ENCODE measurements at regions of chr12 and their contacts with region 1.

Region 1: GRCh38 chr12:32755654-32756475 is at the start of gene YARS2:
- DNase-seq: peak; percentile 91
- H3K4me3 ChIP-seq: peak within 1 kb of the TSS; percentile 88
- H3K27me3 ChIP-seq: no peaks in the 10 kb centered on the region
- CTCF ChIP-seq: peak; percentile 71
- polyA plus RNA-seq, gene YARS2: 19.0 TPM in 2 replicates

Region 2: DNA sequence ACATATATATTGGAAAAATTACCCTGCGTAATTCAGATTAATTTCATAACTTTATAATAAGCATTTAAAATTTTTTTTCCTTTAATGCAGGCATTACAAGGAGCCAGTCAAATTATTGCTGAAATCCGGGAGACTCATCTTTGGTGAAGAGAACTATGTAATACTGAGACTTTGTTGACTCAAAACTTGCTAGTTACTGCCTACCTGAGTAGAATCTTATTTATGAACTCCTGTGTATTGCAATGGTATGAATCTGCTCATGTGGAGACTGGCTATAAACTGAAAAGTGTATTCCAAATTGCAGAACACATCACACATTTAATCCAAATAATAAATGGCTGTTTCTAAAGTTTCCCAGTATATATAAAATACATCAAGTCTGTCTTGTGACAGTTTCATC is 12.6 kb before region 1 on chr12:
- CTCF ChIA-PET with region 1: interaction called, 22 read pairs
- POLR2A ChIA-PET with region 1: no interaction called
- DNase-seq: no peak
- H3K4me3 ChIP-seq: no peak overlapping the region
- H3K27me3 ChIP-seq: no peaks in the 10 kb centered on the region
- CTCF ChIP-seq: no peak

Measured in BJ (cell line).